PC-3 (cell line): ENCODE measurements at regions of chr1 and their contacts with region 1.

Region 1: DNA sequence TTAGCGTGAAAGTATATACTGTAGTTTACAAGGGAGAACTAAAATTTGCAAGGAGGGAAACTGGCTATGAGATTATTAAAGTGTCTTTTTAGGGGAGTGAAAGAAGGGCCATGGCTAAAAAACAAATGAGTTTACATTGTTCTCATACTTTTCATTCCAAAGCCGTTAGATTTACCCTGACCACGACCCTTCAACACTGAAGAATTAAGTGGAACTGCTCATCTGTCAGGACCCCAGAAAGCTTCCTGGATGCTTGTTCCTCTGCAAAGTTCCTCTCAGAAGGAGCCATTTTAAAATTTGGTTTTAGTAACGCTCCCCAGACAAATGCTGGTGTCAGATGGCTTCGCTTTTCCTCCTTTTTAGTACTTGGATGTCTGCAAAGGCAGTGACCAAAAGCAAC is 82.7 kb upstream of the ZBTB18 start:
- DNase-seq: no peak
- ATAC-seq: no peak
- H3K4me3 ChIP-seq: no peak overlapping the region
- H3K27ac ChIP-seq: no peak overlapping the region
- H3K4me1 ChIP-seq: no peaks in the 10 kb centered on the region; the same call in 1 of the 2 replicates
- H3K27me3 ChIP-seq: no peaks in the 10 kb centered on the region
- CTCF ChIP-seq: no peak

Region 2: DNA sequence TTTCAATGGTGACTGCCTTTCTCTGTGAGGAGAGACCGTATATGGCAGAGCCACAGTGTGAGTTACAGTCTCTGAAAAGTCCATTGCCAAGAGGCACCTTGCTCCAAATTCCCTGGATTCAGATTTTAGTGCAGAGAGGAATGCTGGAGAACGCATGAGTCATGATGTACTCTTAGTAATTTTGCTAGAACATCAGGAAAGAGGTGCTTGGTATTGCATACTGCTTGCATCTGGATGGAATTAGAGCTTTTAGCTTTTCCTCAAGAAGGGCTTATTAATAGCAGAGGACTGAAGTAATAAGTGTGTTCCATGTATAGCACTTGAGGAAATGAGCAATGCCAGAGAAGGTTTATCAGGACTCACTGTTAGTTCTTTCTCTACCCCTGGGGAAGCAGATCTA is 77.8 kb before region 1 on chr1:
- CTCF ChIA-PET with region 1: no interaction called
- POLR2A ChIA-PET with region 1: no interaction called
- intact Hi-C with region 1: loop called (anchors 5 kb)
- DNase-seq: peak; percentile 61
- ATAC-seq: peak; percentile 79
- H3K4me3 ChIP-seq: no peak overlapping the region
- H3K27ac ChIP-seq: no peak overlapping the region
- H3K4me1 ChIP-seq: peaks cover 8% of the 10 kb centered on the region
- H3K27me3 ChIP-seq: no peaks in the 10 kb centered on the region
- CTCF ChIP-seq: no peak

Region 3: GRCh38 chr1:243917177-243917862 is 51.1 kb before region 1 on chr1:
- CTCF ChIA-PET with region 1: no interaction called
- POLR2A ChIA-PET with region 1: no interaction called
- intact Hi-C with region 1: no loop called
- DNase-seq: peak; percentile 93
- ATAC-seq: peak; percentile 83
- H3K4me3 ChIP-seq: peak overlapping the region; percentile 70
- H3K27ac ChIP-seq: peak overlapping the region; percentile 43
- H3K4me1 ChIP-seq: peaks cover 29% of the 10 kb centered on the region
- H3K27me3 ChIP-seq: no peaks in the 10 kb centered on the region
- CTCF ChIP-seq: peak; percentile 31; the same call in 1 of the 2 replicates

Region 4: DNA sequence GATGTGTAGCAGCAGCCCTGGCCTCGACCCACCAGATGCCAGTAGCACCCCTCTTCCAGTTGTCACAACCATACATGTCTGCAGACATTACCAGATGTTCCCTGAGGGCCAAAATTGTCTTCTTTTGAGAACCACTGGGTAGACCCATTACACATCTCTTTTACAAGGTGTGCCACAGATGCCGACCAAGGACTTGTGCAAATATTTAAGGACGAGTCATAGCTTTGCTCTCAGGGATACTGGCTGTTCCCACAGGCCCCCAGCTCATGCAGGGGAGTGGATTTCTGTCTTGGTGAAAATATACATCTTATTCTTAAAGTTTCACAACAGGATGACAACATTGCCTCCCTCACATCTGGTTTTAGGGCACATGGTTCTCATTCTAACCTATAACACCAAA is 23.2 kb after region 1 on chr1:
- CTCF ChIA-PET with region 1: no interaction called
- POLR2A ChIA-PET with region 1: no interaction called
- intact Hi-C with region 1: no loop called
- DNase-seq: peak; percentile 53
- ATAC-seq: peak; percentile 90
- H3K4me3 ChIP-seq: no peak overlapping the region
- H3K27ac ChIP-seq: no peak overlapping the region
- H3K4me1 ChIP-seq: no peaks in the 10 kb centered on the region
- H3K27me3 ChIP-seq: no peaks in the 10 kb centered on the region
- CTCF ChIP-seq: no peak

Region 5: DNA sequence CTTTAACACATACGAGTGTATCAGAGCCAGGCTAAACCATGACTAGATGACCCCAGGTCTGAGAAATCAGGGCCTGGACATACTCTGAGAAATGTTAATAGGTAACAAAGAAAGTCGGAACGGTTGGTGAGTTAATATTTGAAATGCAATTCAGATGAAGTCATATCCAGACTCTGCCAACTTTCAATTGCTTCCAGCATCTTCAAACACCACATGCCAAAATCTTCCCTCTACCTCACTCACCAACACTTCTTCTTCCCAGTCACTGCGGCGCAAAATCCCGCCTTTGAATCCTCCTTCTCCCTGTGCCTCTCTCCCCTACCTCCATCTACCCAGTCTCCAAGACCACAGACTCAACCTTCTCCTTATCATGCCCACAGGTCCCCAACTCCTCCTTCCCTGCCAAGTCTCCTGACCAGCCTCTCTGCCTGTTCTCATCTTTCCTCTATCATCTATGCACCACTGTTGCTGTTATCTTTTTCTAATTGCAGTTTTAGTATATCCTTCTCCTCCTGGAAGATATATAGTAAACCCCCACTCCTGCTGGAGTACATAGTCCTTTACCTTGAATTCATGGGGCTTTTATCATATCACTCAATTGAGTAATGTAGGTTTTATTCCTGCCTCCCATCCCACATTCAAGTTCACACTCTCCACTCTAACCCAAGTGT is 124.0 kb after region 1 on chr1:
- CTCF ChIA-PET with region 1: no interaction called
- POLR2A ChIA-PET with region 1: no interaction called
- intact Hi-C with region 1: no loop called
- DNase-seq: peak; percentile 63
- ATAC-seq: peak; percentile 76
- H3K4me3 ChIP-seq: no peak overlapping the region
- H3K27ac ChIP-seq: no peak overlapping the region
- H3K4me1 ChIP-seq: peaks cover 10% of the 10 kb centered on the region; the same call in 1 of the 2 replicates
- H3K27me3 ChIP-seq: no peaks in the 10 kb centered on the region
- CTCF ChIP-seq: no peak